Adrenal gland (tissue), 19 donors: ENCODE measurements at regions of chr14 and their contacts with region 1.

Region 1: DNA sequence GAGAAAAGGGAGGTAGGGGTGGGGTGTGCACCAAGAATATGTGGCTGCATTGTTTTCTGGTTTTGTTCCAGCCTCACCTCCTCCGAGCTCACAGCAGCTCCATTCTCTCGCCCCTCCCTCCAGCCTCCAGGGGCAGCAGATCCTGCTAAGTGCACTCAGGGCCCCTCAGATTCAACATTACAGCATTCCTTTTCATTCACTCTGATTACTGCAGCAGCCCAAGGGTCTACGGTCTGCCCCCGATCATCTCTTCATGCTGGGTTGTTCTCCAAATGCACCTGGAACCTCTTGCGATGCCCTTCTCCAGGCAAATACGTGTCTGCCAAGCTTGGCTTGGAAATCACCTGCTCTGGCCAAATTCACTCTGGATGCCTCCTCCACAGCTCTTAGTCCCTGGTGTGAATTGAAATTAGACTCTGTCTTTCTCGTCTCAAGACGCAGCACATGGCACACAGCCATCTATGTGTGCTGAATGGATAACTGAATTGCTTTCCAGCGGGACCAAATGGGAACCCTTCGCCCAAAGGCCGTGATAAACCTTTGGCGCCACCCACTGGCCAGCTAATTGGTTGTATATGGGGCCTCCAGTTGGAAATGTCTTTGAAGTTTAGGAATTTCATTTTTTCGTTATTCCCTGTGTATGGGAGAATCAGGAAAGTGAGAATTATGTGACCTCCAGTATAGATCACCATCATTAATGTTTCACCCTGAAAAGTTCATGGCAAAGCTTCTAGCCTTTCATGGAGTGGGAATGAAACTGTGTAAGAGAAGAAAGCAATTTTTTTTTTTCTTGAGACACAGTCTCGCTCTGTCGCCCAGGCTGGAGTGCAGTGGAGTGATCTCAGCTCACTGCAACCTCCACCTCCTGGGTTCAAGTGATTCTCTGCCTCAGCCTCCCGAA is 9.6 kb upstream of the HSP90AA1 start:
- DNase-seq: peak; percentile 82 to 95 (median 89)
- H3K4me3 ChIP-seq: no peak overlapping the region
- H3K27ac ChIP-seq: no peak overlapping the region
- H3K4me1 ChIP-seq: no peaks in the 10 kb centered on the region
- H3K27me3 ChIP-seq: no peaks in the 10 kb centered on the region
- CTCF ChIP-seq: peak; percentile 54 to 88 (median 83)
- POLR2A ChIP-seq: no peak

Region 2: GRCh38 chr14:101707068-101707842 is 389.2 kb before region 1 on chr14:
- intact Hi-C with region 1: loop called in 1 of 2 experiments (anchors 10 kb)
- DNase-seq: peak; percentile 48 to 81 (median 63)
- H3K4me3 ChIP-seq: peak overlapping the region in 1 of 4 donors; percentile 32
- H3K27ac ChIP-seq: peak overlapping the region in 2 of 5 donors; percentile 84 to 87
- H3K4me1 ChIP-seq: peaks cover 0 to 13% of the 10 kb centered on the region in 2 donors
- H3K27me3 ChIP-seq: no peaks in the 10 kb centered on the region
- CTCF ChIP-seq: peak; percentile 83 to 94 (median 89)
- POLR2A ChIP-seq: no peak

Region 3: GRCh38 chr14:102046343-102047278 is 49.9 kb before region 1 on chr14:
- intact Hi-C with region 1: loop called (anchors 5 kb)
- DNase-seq: peak; percentile 88 to 96 (median 95)
- H3K4me3 ChIP-seq: no peak overlapping the region
- H3K27ac ChIP-seq: peak overlapping the region in 2 of 5 donors; percentile 13 to 60
- H3K4me1 ChIP-seq: peaks cover 0 to 8% of the 10 kb centered on the region in 2 donors
- H3K27me3 ChIP-seq: no peaks in the 10 kb centered on the region
- CTCF ChIP-seq: peak; percentile 28 to 78 (median 60)
- POLR2A ChIP-seq: no peak

Region 4: GRCh38 chr14:102063091-102063802 is 33.2 kb before region 1 on chr14:
- intact Hi-C with region 1: loop called in 1 of 2 experiments (anchors 5 kb)
- DNase-seq: peak; percentile 78 to 94 (median 87)
- H3K4me3 ChIP-seq: no peak overlapping the region
- H3K27ac ChIP-seq: no peak overlapping the region
- H3K4me1 ChIP-seq: peaks cover 0 to 11% of the 10 kb centered on the region in 2 donors
- H3K27me3 ChIP-seq: no peaks in the 10 kb centered on the region
- CTCF ChIP-seq: peak; percentile 27 to 67 (median 53)
- POLR2A ChIP-seq: no peak

Region 5: DNA sequence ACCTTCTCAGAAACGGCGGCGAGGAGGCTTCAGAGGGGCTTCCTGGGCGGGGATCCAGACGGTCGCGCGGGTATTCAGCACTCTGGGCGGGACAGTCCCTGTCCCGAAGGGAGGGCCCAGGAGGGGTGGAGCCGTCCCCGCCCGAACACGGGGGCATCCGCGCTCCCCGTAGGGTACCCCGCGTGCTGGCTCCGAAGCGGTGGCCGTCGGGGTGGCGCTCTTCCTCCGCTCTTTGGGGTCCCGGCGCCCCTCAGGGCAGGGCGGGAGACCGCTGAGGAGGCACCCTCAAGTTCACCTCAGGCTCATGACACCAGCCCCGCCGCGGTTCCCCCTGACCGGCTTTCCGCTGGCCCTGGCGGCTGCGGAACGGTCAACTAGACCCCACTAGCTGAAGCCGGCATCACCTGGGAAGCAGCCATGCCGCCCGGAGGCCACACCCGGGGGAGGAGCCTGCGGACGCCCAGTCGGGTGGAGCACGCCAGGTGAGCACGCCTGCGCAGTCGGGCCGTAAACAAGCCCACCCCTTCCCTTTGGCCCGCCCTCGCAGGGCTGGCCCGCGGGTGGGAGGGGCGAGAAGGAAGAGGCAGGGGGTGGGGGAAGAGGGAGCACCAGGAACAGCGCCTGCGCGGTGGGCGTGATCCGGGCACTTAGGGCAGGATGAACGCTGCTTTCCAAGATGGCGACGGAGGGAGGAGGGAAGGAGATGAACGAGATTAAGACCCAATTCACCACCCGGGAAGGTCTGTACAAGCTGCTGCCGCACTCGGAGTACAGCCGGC is 43.0 kb after region 1 on chr14 and contains the start of gene WDR20:
- intact Hi-C with region 1: no loop called
- DNase-seq: peak; percentile 97 to 99 (median 98)
- H3K4me3 ChIP-seq: peak within 1 kb of the TSS; percentile 72 to 97 (median 88)
- H3K27ac ChIP-seq: peak within 1 kb of the TSS; percentile 63 to 90 (median 69)
- H3K4me1 ChIP-seq: peaks cover 8 to 29% of the 10 kb centered on the region in 2 donors
- H3K27me3 ChIP-seq: no peaks in the 10 kb centered on the region
- CTCF ChIP-seq: no peak
- POLR2A ChIP-seq: peak in 1 of 2 donors; percentile 68
- total RNA-seq, gene WDR20: 13.1 to 55.9 (median 44.6) TPM